Activated naive CD4-positive, alpha-beta T cell treated with anti-CD3 and anti-CD28 coated beads for 36 hours (primary cell): ENCODE measurements at regions of chr1 and their contacts with region 1.

Region 1: DNA sequence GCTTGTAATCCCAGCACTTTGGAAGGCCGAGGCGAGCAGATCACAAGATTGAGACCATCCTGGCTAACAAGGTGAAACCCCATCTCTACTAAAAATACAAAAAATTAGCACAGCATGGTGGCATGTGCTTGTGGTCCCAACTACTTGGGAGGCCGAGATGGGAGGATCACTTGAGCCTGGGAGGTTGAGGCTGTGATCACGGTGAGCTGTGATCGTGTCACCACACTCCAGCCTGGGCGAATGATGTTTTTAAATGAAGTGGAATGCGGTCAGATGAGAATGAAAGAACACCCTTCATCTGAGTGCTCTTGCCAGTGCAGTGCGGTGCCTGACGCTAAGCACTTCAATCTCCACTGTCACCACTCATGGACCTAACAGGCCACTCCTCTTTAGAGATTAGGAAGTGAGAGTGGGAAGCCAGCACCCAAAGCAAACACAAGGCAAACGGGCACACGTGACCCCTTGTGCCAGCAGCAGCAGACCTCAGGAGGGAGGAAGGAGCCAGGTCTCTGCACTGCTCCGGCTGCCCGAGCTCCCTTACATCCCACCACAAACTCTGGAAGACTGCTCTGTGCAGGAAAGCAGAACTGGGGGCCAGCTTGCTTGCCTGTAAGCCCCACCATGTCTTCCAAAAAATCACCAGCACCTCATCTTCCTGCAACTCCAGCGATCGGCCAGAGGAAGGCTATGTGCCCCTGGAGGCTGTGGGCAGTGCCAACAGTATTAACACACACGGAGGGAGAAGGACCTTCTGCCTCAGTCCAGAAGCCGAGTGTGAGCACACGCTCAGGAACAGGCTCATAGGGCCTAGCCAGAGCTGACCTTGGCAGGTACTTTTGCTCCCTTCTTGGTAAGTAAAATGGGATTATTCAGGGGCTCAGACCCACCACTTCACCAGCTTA is 9.7 kb downstream of the CTNNBIP1 start:
- DNase-seq: peak; percentile 13
- H3K4me3 Mint-ChIP-seq: peak overlapping the region; percentile 3
- H3K27ac Mint-ChIP-seq: no peak overlapping the region
- H3K4me1 Mint-ChIP-seq: peaks cover 39% of the 10 kb centered on the region
- H3K27me3 Mint-ChIP-seq: no peaks in the 10 kb centered on the region

Region 2: GRCh38 chr1:10045480-10046355 is 145.3 kb after region 1 on chr1:
- CTCF ChIA-PET with region 1: no interaction called
- intact Hi-C with region 1: no loop called
- DNase-seq: no peak
- H3K4me3 Mint-ChIP-seq: no peak overlapping the region
- H3K27ac Mint-ChIP-seq: no peak overlapping the region
- H3K4me1 Mint-ChIP-seq: peaks cover 23% of the 10 kb centered on the region
- H3K27me3 Mint-ChIP-seq: no peaks in the 10 kb centered on the region

Region 3: GRCh38 chr1:10170239-10170574 is 269.8 kb after region 1 on chr1:
- CTCF ChIA-PET with region 1: no interaction called
- intact Hi-C with region 1: loop called (anchors 1 kb)
- DNase-seq: peak; percentile 48
- H3K4me3 Mint-ChIP-seq: no peak overlapping the region
- H3K27ac Mint-ChIP-seq: peak overlapping the region; percentile 87
- H3K4me1 Mint-ChIP-seq: peaks cover 40% of the 10 kb centered on the region
- H3K27me3 Mint-ChIP-seq: no peaks in the 10 kb centered on the region